PC-9 (cell line): ENCODE measurements at regions of chr7 and their contacts with region 1.

Region 1: DNA sequence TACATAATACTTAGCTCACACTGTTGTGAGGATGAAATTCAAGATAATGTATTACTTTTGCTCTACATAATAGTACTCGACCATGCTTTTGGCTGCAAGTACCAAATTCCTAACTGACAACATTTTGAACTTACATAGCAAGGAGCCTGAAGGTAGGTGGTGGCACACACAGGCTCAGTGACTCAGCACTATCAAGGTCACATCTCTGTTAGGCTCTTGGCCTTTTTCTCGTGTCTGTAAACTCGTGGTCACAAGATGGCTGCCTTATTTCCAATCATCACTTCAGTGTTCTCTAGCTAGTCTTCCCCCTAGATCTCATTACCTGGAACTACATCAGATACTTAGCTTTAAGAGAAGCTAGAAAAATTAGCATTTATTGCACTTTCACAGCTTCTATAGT is 61.4 kb upstream of the ABCB5 start:
- DNase-seq: no peak
- H3K4me3 ChIP-seq: no peak overlapping the region
- H3K27ac ChIP-seq: no peak overlapping the region
- H3K4me1 ChIP-seq: no peaks in the 10 kb centered on the region
- H3K27me3 ChIP-seq: no peaks in the 10 kb centered on the region
- CTCF ChIP-seq: no peak

Region 2: DNA sequence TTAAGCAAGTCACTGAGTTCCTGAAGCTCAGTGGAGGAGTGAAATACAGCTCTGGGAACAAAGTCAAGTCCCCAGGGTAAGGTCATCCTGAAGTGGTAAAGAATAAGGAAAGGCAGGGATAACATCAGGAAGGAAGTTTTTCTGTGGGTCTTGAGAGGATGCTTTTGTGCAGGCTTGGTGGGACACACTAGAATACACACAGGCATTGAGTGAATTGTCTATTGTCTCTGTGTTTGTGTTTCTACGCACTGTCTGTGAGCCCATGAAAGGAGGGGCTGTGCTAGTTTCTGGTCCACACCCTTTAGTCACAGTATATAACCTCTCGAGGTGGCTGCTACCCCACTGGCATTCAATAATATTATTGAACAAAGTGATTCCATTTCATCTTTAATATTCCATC is 34.4 kb before region 1 on chr7:
- CTCF ChIA-PET with region 1: interaction called, 11 read pairs
- POLR2A ChIA-PET with region 1: no interaction called
- intact Hi-C with region 1: no loop called
- DNase-seq: peak in 1 of 2 experiments; percentile 25
- H3K4me3 ChIP-seq: no peak overlapping the region
- H3K27ac ChIP-seq: no peak overlapping the region
- H3K4me1 ChIP-seq: no peaks in the 10 kb centered on the region
- H3K27me3 ChIP-seq: no peaks in the 10 kb centered on the region
- CTCF ChIP-seq: no peak

Region 3: DNA sequence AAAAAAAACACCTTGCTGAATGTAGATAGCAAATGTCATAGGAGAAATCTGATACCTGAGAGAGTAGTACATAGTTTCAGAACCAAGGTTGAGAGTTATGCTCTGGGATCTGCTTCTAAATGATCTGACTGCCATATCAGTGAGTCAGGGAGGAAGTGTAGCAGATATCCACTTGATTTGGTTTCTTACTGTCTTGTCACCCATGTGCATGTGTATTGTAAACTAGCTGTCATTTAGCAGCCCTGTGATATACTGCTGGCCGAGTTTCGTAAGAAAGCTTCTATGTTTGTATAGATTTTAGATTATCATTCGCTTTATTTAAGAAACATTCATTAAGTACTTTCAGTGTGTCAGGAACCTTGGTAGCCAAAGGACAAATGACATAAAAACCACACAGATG is 915.8 kb after region 1 on chr7:
- CTCF ChIA-PET with region 1: no interaction called
- POLR2A ChIA-PET with region 1: interaction called, 14 read pairs
- intact Hi-C with region 1: no loop called
- DNase-seq: peak in 1 of 2 experiments; percentile 38
- H3K4me3 ChIP-seq: no peak overlapping the region
- H3K27ac ChIP-seq: no peak overlapping the region
- H3K4me1 ChIP-seq: no peaks in the 10 kb centered on the region
- H3K27me3 ChIP-seq: no peaks in the 10 kb centered on the region
- CTCF ChIP-seq: no peak